ENCODE measurements at regions of chr1 and their contacts with region 1.

Region 1: GRCh38 chr1:203326830-203327683 is 21.7 kb downstream of the BTG2 start:
- DNase-seq: peak; percentile 89
- H3K4me3 ChIP-seq: peak overlapping the region; percentile 47 to 59 (median 51)
- H3K27ac ChIP-seq: peak overlapping the region; percentile 37
- H3K4me1 ChIP-seq: peaks cover 14% of the 10 kb centered on the region
- H3K27me3 ChIP-seq: no peaks in the 10 kb centered on the region
- CTCF ChIP-seq: no peak

Region 2: DNA sequence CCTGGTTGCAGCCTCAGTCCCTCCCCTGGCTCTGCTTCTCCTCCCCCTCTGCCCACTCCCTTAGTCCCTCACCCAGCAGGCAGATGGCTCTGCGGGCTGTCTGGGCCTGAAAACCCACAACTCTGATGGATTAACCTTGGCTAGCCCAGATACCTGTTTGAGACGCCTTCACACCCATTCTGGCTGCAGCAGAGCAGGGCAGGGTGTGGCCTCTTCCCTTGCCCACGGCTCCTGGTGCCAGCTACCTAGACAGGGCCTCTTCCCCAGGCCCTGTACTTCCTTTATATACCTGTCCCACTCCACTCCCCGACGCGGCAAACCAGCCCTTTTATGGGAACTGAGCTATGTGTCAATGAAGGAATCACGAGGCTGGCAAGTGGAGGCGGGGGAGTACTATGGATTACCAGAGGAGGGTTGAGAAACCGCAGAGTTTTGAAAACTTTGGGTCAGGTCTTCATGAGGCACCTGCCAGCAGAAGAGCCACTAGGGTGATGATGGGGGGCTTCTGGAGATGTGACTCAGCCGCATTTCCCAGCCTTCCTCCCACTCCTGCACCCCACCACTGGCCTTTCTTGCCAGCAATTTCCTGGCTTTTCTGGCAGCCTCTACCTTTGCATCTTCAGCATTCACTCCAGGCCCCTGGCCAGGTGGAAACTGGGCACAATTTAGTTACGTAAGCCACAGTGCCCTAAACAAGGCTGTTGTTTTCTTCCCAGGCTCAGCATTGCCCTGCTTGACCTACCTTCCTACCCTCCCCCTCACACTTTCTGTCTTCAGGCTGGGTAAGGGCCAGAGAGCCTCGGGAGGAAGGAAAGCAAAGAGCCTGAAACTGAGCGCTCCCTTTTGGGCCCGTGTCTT is 140.4 kb before region 1 on chr1 and contains the start of gene CHI3L1:
- CTCF ChIA-PET with region 1: no interaction called
- dilution Hi-C with region 1: no loop called
- in situ Hi-C with region 1: no loop called
- intact Hi-C with region 1: no loop called
- DNase-seq: peak; percentile 32
- H3K4me3 ChIP-seq: no peak within 1 kb of the TSS
- H3K27ac ChIP-seq: no peak within 1 kb of the TSS
- H3K4me1 ChIP-seq: peaks cover 7% of the 10 kb centered on the region
- H3K27me3 ChIP-seq: no peaks in the 10 kb centered on the region
- CTCF ChIP-seq: no peak
- total RNA-seq, gene CHI3L1: 37.0 TPM in 1 of 2 donors, not detected in the other

Region 3: GRCh38 chr1:203280996-203281395 is 46.1 kb before region 1 on chr1:
- CTCF ChIA-PET with region 1: no interaction called
- dilution Hi-C with region 1: no loop called
- in situ Hi-C with region 1: no loop called
- intact Hi-C with region 1: loop called (anchors 2 kb)
- DNase-seq: peak; percentile 90
- H3K4me3 ChIP-seq: no peak overlapping the region
- H3K27ac ChIP-seq: peak overlapping the region; percentile 51
- H3K4me1 ChIP-seq: peaks cover 34% of the 10 kb centered on the region
- H3K27me3 ChIP-seq: no peaks in the 10 kb centered on the region
- CTCF ChIP-seq: peak in 1 of 2 donors; percentile 60

Region 4: GRCh38 chr1:203290261-203291089 is 36.6 kb before region 1 on chr1:
- CTCF ChIA-PET with region 1: no interaction called
- dilution Hi-C with region 1: no loop called
- in situ Hi-C with region 1: no loop called
- intact Hi-C with region 1: loop called (anchors 1 kb)
- DNase-seq: peak; percentile 62
- H3K4me3 ChIP-seq: no peak overlapping the region
- H3K27ac ChIP-seq: no peak overlapping the region
- H3K4me1 ChIP-seq: peaks cover 30% of the 10 kb centered on the region
- H3K27me3 ChIP-seq: no peaks in the 10 kb centered on the region
- CTCF ChIP-seq: no peak

Measured in mammary epithelial cell (primary cell).